ENCODE measurements at regions of chr19 and their contacts with region 1.

Region 1: DNA sequence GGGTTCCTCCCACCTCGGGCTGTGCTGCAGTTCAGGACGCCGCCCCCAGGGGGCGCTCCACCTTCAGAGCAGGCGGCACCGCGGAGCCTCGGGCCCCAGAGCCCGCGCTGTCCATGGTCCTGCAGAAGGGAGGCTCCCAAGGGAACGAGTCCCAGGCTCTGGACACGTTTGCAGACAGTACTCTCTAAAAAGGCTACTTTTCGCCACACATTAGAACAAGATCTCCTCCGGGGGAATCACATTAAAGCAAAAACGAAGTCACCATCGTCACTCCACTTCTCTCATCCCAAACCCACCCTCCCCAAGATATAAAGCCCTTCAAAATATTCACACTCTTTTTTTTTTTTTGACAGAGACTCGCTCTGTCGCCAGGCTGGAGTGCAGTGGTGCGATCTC is 4.6 kb upstream of the SIGLEC10 start:
- DNase-seq: peak; percentile 81 to 84 (median 82)
- H3K4me3 ChIP-seq: no peak overlapping the region
- H3K4me3 Mint-ChIP-seq: no peak overlapping the region
- H3K27ac ChIP-seq: no peak overlapping the region
- H3K27ac Mint-ChIP-seq: no peak overlapping the region
- H3K4me1 ChIP-seq: peaks cover 48 to 55% of the 10 kb centered on the region in 2 donors
- H3K4me1 Mint-ChIP-seq: peaks cover 42% of the 10 kb centered on the region
- H3K27me3 ChIP-seq: peaks cover 0 to 9% of the 10 kb centered on the region in 2 donors
- H3K27me3 Mint-ChIP-seq: peaks cover 9 to 24% (median 18%) of the 10 kb centered on the region in 3 donors
- CTCF ChIP-seq: peak; percentile 100

Region 2: GRCh38 chr19:51441410-51442390 is 19.6 kb after region 1 on chr19:
- intact Hi-C with region 1: loop called (anchors 2 kb)
- DNase-seq: peak; percentile 51 to 88 (median 54)
- H3K4me3 ChIP-seq: peak overlapping the region in 1 of 3 experiments; percentile 41
- H3K4me3 Mint-ChIP-seq: peak overlapping the region; percentile 20 to 87
- H3K27ac ChIP-seq: no peak overlapping the region
- H3K27ac Mint-ChIP-seq: peak overlapping the region in 4 of 7 donors; percentile 28 to 82 (median 60)
- H3K4me1 ChIP-seq: peaks cover 16 to 26% of the 10 kb centered on the region in 2 donors
- H3K4me1 Mint-ChIP-seq: peaks cover 22% of the 10 kb centered on the region
- H3K27me3 ChIP-seq: peaks cover 20 to 36% of the 10 kb centered on the region in 2 donors
- H3K27me3 Mint-ChIP-seq: peaks cover 34 to 44% (median 35%) of the 10 kb centered on the region in 3 donors
- CTCF ChIP-seq: no peak

Region 3: GRCh38 chr19:51824281-51825005 is 402.4 kb after region 1 on chr19:
- intact Hi-C with region 1: loop called in 1 of 2 experiments (anchors 10 kb)
- DNase-seq: peak; percentile 91 to 96 (median 92)
- H3K4me3 ChIP-seq: peak overlapping the region in 1 of 3 experiments; percentile 41
- H3K4me3 Mint-ChIP-seq: peak overlapping the region; percentile 2 to 56
- H3K27ac ChIP-seq: peak overlapping the region; percentile 88 to 99
- H3K27ac Mint-ChIP-seq: peak overlapping the region; percentile 97 to 99 (median 98)
- H3K4me1 ChIP-seq: peaks cover 77 to 78% of the 10 kb centered on the region in 2 donors
- H3K4me1 Mint-ChIP-seq: peaks cover 80% of the 10 kb centered on the region
- H3K27me3 ChIP-seq: no peaks in the 10 kb centered on the region
- H3K27me3 Mint-ChIP-seq: peaks cover 0 to 6% (median 0%) of the 10 kb centered on the region in 3 donors
- CTCF ChIP-seq: no peak